ENCODE measurements at regions of chr2 and their contacts with region 1.

Region 1: GRCh38 chr2:234500394-234501006 is 3.6 kb upstream of the ARL4C start:
- DNase-seq: peak; percentile 46
- ATAC-seq: peak; percentile 20 to 61

Region 2: DNA sequence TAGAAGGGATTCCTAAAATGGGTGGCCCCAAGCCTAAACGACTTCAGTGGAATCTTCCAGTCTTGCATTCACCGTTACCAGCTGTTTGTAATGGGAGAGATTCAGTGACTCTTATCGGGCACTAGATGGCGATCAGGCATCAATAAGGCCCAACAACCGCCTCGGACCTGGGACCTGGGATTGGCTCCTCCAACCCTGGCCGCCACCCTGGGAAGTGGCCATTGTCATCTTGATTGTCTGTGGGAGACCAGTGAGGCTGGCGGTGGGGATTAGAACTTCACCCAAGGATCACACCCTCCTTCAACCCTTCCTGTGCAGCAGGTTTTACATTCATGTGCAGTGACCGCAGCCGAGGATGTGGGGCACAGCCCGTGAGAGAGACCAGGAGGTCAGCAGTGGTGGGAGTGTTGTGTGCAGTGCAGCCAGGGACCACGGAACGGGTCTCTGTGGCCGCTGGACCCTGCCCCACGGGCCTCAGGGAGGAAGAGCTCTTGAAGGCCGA is 364.7 kb before region 1 on chr2:
- intact Hi-C with region 1: loop called (anchors 2 to 5 kb)
- DNase-seq: peak; percentile 49
- ATAC-seq: peak; percentile 72 to 91

Region 3: DNA sequence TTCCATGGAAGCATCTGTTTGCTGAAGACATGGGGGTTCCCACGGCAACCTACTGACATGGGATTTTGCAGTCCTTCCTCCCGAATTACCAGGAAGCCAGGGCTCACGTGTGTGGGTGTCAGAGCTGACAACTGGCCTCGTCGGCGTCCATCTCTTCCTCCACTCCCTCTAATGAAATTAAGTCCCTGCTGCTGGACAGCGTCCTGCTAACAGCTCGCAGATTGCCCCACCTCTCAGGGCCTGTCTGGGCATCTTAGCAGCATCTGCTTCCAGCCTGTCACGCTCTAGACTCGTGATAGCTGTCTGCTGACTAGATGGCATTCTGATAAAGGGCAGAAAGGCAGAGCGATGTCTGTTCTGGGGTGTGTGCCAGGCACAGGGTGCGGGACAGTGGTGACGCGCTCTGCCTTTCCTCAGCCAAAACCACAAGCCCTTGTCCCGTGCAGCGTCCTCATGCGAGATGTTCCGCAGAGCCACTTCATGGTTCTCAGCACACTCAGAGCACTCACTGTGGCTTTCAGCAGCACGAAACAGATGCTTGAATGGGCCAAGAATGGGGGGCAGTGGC is 164.8 kb before region 1 on chr2:
- intact Hi-C with region 1: loop called in 1 of 2 experiments (anchors 5 kb)
- DNase-seq: peak; percentile 82
- ATAC-seq: peak; percentile 90 to 95

Region 4: GRCh38 chr2:234446404-234447076 is 54.0 kb before region 1 on chr2:
- intact Hi-C with region 1: no loop called
- DNase-seq: peak; percentile 78
- ATAC-seq: peak; percentile 88 to 96